Adrenal gland (tissue), 19 donors: ENCODE measurements at regions of chr18 and their contacts with region 1.

Region 1: DNA sequence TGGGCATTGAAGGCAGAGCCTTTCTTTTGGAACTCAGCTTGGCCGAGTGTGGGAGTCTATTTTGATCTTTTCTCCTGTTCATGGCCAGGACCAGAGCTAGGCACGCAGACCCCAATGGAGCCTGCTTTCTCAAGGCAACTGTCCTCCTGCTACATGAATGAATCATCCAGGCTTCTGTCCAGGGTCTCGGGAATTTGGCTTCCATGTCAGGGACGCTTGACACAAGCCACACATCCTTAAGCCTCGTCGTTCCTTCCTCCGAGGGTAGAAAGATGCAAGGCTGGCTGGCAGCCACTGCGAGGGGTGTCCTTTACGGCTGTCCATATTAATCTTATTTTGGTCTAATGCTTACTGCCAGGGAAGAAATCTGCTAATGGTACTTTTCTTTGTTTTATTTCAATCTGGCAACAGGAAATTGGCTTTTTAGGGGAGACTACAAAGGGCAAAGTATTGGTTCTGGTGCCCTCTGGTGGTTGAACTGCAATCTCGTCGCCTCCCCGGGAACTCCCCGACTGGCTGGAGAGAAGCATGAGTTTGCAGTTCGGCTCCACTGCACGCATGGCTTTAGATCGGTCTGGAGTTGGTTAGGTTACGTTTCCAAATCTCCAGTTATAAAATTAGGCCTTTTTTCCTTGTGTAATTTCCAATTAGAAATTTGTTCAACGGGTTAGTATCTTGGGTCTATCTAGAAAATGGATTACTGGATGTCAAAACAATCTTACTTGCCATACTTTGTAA is 135.2 kb downstream of the ALPK2 start:
- DNase-seq: peak; percentile 77 to 92 (median 79)
- H3K4me3 ChIP-seq: peak overlapping the region in 1 of 4 donors; percentile 33
- H3K27ac ChIP-seq: no peak overlapping the region
- H3K4me1 ChIP-seq: peaks cover 0 to 3% of the 10 kb centered on the region in 2 donors
- H3K27me3 ChIP-seq: peaks cover 2% of the 10 kb centered on the region
- CTCF ChIP-seq: peak; percentile 73 to 86 (median 80)
- POLR2A ChIP-seq: no peak

Region 2: DNA sequence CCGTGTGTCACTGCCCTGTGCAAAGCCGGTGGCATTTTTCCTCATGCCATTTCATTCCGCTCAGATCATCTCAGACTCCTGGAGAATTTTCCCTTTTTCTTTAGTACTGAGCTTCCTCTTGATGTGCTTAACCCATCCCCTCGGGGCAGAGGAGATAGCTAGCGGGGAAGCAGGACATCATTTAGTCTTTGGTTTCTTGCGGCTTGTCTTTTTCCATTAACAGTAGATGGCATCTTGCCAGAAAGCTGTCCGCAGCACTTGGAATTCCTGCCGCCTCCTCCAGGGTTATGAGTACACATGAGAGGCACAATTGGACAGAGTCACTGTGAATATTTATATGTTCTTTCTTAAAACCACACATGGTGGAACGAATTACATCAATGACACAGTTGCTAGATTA is 91.4 kb before region 1 on chr18:
- intact Hi-C with region 1: loop called in 1 of 2 experiments (anchors 5 kb)
- DNase-seq: peak in 1 of 7 donors; percentile 13
- H3K4me3 ChIP-seq: no peak overlapping the region
- H3K27ac ChIP-seq: no peak overlapping the region
- H3K4me1 ChIP-seq: peaks cover 0 to 5% of the 10 kb centered on the region in 2 donors
- H3K27me3 ChIP-seq: no peaks in the 10 kb centered on the region
- CTCF ChIP-seq: no peak
- POLR2A ChIP-seq: no peak

Region 3: GRCh38 chr18:58438161-58438957 is 55.3 kb before region 1 on chr18:
- intact Hi-C with region 1: no loop called
- DNase-seq: no peak
- H3K4me3 ChIP-seq: peak overlapping the region in 1 of 4 donors; percentile 50
- H3K27ac ChIP-seq: no peak overlapping the region
- H3K4me1 ChIP-seq: no peaks in the 10 kb centered on the region
- H3K27me3 ChIP-seq: no peaks in the 10 kb centered on the region
- CTCF ChIP-seq: no peak
- POLR2A ChIP-seq: no peak